PC-3 (cell line): ENCODE measurements at regions of chr10 and their contacts with region 1.

Region 1: DNA sequence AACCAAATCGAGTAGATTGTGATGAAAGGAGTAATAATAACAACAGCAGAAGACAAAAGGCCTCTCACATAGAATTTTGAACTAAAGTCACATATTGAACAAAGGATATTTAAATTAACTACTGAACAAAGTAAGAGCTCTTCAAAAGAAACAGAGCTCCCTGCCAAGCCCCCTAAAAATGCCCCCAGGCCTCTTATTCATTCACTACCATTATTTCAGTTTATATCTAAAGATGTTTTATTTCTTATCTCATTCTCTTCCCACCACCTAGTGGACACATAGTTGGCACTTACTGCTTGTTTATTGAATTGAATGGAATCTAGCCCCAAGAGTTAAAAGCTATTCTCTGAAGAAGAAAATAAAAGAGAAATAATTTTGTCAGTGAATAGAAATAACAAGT is 37.4 kb downstream of the VCL start:
- DNase-seq: peak; percentile 76
- ATAC-seq: peak; percentile 51
- H3K4me3 ChIP-seq: no peak overlapping the region
- H3K27ac ChIP-seq: no peak overlapping the region
- H3K4me1 ChIP-seq: no peaks in the 10 kb centered on the region
- H3K27me3 ChIP-seq: no peaks in the 10 kb centered on the region
- CTCF ChIP-seq: peak; percentile 98

Region 2: GRCh38 chr10:73838827-73839226 is 196.5 kb before region 1 on chr10:
- CTCF ChIA-PET with region 1: no interaction called
- POLR2A ChIA-PET with region 1: no interaction called
- intact Hi-C with region 1: no loop called
- DNase-seq: peak; percentile 76
- ATAC-seq: peak; percentile 68
- H3K4me3 ChIP-seq: no peak overlapping the region
- H3K27ac ChIP-seq: no peak overlapping the region
- H3K4me1 ChIP-seq: peaks cover 30% of the 10 kb centered on the region
- H3K27me3 ChIP-seq: no peaks in the 10 kb centered on the region
- CTCF ChIP-seq: no peak

Region 3: DNA sequence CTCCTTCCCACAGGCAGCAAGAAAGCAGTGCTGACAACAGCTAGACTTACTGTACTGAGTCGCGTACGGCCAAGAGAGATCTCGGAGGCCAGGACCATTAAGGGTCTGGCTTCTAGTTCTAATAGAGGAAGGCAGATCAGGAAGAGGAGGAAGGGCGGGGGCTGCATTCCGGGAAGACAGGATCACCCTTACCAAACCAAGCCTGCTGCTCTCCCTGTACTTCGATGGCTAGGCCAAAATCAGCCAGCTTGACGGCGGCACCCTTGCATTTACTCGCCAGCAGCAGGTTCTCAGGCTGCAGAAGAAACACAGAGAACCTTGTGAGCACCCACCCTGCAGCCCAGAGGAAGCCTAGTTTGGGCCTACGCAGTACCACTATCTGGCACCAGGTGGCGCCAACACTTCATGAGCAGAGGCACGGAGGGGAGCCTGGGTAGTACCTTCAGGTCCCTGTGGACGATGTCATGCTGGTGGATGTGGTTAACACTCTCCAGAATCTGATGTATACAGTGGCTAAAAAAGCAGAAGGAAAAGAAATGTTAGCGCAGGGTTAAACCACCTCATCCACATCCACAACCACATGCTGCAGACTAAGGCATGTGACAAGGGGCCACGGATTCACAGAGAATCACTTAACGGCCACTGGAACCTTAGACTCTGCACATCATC is 186.3 kb before region 1 on chr10:
- CTCF ChIA-PET with region 1: no interaction called
- POLR2A ChIA-PET with region 1: no interaction called
- intact Hi-C with region 1: no loop called
- DNase-seq: peak; percentile 100
- ATAC-seq: peak; percentile 96
- H3K4me3 ChIP-seq: no peak overlapping the region
- H3K27ac ChIP-seq: no peak overlapping the region
- H3K4me1 ChIP-seq: no peaks in the 10 kb centered on the region
- H3K27me3 ChIP-seq: no peaks in the 10 kb centered on the region
- CTCF ChIP-seq: peak; percentile 100

Region 4: GRCh38 chr10:73956476-73957359 is 78.6 kb before region 1 on chr10:
- CTCF ChIA-PET with region 1: interaction called, 12 read pairs
- POLR2A ChIA-PET with region 1: no interaction called
- intact Hi-C with region 1: no loop called
- DNase-seq: peak; percentile 67
- ATAC-seq: peak; percentile 39
- H3K4me3 ChIP-seq: no peak overlapping the region
- H3K27ac ChIP-seq: no peak overlapping the region
- H3K4me1 ChIP-seq: peaks cover 11% of the 10 kb centered on the region
- H3K27me3 ChIP-seq: no peaks in the 10 kb centered on the region
- CTCF ChIP-seq: no peak

Region 5: DNA sequence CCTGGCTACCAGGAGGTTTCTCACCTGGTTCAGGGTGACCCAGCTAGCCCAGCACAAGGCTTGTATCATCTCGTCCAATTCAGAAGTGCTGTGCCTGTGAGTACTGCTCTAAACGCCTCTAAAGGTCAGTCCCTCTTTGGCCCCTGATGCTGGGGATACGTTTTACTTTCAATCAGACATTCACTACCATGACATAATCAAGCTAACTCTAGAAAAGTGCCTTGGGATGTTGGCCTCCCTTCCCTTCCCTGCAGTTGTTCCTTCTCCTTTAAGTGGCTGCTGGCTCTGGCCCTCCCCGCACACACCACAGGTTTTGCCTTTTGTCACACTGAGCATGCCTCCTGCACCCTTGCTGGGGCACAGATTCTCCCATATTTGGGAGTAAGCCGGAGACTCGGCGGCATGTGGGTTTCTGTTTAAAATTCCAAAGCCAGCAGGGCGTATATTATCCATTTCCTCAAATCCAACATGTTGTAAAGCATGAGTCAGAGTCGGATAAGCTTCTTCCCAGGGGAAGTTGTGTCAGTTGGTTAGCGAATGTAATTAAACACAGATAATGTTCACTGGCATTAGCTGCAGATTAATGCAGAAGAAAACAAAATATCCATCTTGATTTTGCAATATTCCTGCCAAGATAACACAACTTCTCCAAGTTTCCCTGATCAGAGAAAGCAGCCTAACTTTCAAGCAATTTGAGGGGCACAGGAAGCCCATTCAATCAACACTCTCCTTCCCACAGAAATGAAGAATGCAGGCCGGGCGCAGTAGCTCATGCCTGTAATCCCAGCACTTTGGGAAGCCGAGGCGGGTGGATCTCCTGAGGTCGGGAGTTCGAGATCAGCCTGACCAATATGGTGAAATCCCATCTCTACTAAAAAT is 69.2 kb before region 1 on chr10:
- CTCF ChIA-PET with region 1: no interaction called
- POLR2A ChIA-PET with region 1: no interaction called
- intact Hi-C with region 1: loop called (anchors 1 kb)
- DNase-seq: peak; percentile 100
- ATAC-seq: peak; percentile 98
- H3K4me3 ChIP-seq: peak overlapping the region; percentile 6
- H3K27ac ChIP-seq: peak overlapping the region; percentile 73
- H3K4me1 ChIP-seq: peaks cover 27% of the 10 kb centered on the region
- H3K27me3 ChIP-seq: no peaks in the 10 kb centered on the region
- CTCF ChIP-seq: no peak

Region 6: DNA sequence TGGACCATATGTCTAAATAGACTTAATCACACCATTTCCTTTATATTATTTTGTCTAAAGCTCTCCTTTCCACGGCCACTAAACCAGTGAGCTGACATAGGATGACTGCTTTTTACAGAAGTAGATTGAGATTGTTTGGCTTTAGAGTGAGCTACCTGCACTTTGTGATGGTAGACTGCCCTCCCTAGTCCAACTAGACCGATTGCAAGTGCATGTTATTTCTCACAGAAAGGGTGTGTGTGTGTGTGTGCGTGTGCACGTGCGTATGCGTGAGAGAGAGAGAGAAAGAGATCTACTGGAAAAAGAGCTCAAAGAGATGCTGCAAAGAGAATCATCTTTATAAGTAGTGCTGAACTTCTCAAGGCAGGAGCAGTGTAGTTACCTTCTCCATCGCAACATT is 23.4 kb after region 1 on chr10:
- CTCF ChIA-PET with region 1: interaction called, 5 read pairs
- POLR2A ChIA-PET with region 1: interaction called, 14 read pairs
- intact Hi-C with region 1: loop called (anchors 1 kb)
- DNase-seq: peak; percentile 77
- ATAC-seq: no peak
- H3K4me3 ChIP-seq: no peak overlapping the region; the same call in 1 of the 2 replicates
- H3K27ac ChIP-seq: peak overlapping the region; percentile 71
- H3K4me1 ChIP-seq: peaks cover 55% of the 10 kb centered on the region
- H3K27me3 ChIP-seq: no peaks in the 10 kb centered on the region
- CTCF ChIP-seq: peak; percentile 75